AG04449 (cell line): ENCODE measurements at regions of chr12 and their contacts with region 1.

Region 1: DNA sequence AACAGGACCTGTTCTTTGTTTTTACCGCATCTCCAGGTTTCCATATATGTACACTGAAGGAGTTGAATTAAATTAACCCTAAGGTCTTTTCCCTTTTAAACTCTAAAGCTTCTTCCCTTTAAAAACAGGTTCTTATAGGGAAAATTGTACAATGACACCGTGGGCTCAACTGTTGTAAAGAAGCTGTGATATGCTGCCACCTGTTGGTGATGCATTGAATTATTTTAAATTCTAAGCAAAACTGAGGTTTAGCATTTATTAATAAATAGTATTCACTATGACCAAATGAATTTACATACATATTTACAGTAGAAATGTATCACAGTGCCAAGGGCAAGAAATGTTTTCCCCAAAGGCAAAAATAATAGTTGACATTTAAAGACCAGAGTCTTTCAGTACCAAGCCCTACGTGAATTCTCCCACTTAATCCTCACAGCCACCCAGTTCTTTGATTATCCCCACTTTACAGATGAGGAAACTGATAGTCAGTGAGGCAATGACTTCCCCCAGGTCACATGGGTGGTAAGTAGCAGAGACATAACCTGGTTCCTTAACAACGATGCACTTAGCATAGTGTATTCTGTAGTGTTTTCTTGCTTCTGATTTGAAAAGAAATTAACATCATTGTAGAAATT is 35.7 kb upstream of the TMEM263 start:
- DNase-seq: peak; percentile 14
- H3K4me3 ChIP-seq: no peak overlapping the region
- CTCF ChIP-seq: peak; percentile 43

Region 2: DNA sequence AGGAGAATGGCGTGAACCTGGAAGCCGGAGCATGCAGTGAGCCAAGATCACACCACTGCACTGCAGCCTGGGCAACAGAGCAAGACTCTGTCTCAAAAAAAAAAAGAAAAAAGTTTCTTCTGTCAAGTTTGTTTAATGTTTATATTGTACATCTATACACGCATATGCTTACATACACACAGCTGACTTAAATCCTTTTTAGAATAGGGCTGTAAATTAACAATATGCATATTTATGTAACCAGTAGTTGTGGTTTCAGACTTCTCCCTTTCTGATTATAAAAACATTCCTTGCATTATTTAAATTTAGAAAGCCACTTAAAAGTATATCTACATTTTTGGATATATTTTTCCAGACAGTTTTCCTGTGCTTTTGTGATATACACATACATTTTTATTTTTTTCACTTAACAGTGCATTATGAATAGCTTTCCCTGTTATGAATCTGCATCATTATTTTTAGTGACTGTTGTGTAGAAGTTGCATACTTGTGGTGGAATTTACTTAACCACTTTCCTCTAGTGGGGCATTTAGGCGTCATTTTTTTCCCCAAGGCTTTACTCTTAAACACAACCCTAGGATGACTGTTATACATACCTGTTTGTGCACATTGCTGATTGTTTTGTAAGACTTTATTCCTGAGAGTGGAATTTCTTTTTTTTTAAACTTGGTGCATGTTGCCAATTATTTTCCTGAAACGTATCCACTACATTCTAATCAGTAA is 533.1 kb before region 1 on chr12:
- CTCF ChIA-PET with region 1: interaction called, 118 read pairs
- POLR2A ChIA-PET with region 1: no interaction called
- DNase-seq: peak; percentile 74
- H3K4me3 ChIP-seq: no peak overlapping the region
- CTCF ChIP-seq: no peak

Region 3: GRCh38 chr12:106392759-106393158 is 527.3 kb before region 1 on chr12:
- CTCF ChIA-PET with region 1: interaction called, 118 read pairs
- POLR2A ChIA-PET with region 1: no interaction called
- DNase-seq: no peak
- H3K4me3 ChIP-seq: no peak overlapping the region
- CTCF ChIP-seq: no peak

Region 4: DNA sequence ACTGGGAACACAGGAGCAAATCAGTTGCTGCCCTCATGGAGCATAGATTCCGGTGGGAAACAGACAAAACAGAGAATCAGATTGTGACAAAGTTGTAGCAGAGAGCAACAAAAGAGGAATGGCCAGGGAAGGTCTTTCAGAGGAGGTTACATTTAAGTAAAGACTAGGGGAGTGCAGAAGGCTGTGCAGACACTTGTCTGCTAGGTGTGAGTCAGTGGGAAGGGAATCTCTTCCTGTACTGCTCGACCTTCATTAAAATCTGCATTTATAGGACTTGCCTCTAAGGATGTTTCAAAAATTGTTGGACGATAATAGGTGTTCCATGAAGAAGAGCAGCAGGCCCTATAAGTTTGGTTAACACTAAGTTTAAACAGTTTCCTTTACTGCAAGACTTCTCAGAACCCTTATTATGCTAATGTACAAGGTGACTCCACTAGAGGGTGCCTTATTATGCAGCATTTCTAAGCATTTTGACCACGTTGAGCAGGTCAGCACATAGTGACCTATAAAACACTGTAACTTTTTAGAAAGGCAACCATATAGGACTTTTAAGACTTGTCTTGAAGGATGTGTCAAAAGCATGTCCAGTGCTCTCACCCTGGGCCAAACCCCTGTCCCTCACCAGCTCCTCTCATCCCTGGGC is 237.3 kb before region 1 on chr12:
- CTCF ChIA-PET with region 1: no interaction called
- POLR2A ChIA-PET with region 1: no interaction called
- DNase-seq: no peak
- H3K4me3 ChIP-seq: no peak overlapping the region
- CTCF ChIP-seq: peak; percentile 30

Region 5: GRCh38 chr12:106841510-106842302 is 78.3 kb before region 1 on chr12:
- CTCF ChIA-PET with region 1: interaction called, 20 read pairs
- POLR2A ChIA-PET with region 1: no interaction called
- DNase-seq: no peak
- H3K4me3 ChIP-seq: no peak overlapping the region
- CTCF ChIP-seq: peak; percentile 44

Region 6: DNA sequence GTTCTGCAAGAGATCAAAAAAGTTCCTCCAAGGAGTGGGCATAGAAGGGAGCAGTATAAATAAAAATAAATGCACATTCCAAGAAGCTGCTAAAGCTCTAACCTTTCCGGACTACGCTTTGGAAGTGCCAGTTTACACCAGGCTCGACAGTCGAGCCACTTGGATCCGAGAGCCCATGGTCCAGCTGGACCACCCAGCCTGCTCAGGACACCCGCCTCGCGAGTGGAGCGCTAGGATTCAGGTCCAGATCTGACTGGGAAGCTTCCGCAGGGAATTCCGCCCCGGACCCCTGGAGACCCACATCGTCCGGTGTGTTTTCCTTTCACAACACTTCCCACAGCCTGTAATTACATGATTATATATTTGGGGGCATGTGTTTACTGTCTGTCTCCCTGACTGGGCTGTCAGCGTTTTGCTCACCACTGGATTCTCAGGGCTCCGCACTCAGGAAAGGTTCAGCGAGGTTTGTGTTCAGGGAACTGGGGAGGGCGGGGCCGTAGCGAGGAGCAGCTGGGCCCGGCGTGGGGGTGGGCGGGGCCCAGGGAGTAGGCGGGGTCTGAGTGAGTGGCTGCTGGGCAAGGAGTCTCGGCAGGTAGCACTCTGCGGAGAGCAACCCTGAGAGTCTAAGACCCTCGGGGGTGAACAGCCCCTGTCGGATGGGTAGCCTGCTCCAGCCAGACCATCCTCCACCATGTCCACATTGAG is 16.6 kb before region 1 on chr12:
- CTCF ChIA-PET with region 1: interaction called, 41 read pairs
- POLR2A ChIA-PET with region 1: no interaction called
- DNase-seq: no peak
- H3K4me3 ChIP-seq: peak overlapping the region; percentile 52
- CTCF ChIP-seq: no peak

Region 7: GRCh38 chr12:106994579-106995220 is 74.7 kb after region 1 on chr12:
- CTCF ChIA-PET with region 1: no interaction called
- POLR2A ChIA-PET with region 1: no interaction called
- DNase-seq: peak; percentile 49
- H3K4me3 ChIP-seq: no peak overlapping the region
- CTCF ChIP-seq: no peak

Region 8: DNA sequence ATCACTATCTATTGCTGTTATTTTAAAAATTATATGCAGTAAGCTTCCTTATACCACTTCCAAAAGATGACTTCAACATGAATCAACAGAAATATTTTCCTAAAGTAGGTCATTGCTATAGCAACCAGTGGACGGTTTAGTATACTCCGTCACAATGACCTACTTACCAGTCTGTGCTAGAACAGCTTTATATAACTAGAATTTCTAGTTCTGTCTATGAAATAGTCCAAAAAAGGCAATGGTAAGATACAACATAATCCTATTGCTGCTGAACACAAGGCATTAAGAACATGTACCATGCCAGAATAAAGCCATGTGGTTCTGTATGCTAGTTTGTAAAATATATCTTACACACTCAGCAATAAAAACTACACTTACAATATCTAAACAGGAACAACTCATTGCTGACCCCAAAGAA is 107.6 kb after region 1 on chr12:
- CTCF ChIA-PET with region 1: no interaction called
- POLR2A ChIA-PET with region 1: no interaction called
- DNase-seq: peak; percentile 93
- H3K4me3 ChIP-seq: no peak overlapping the region
- CTCF ChIP-seq: no peak